ENCODE measurements at regions of chr11 and their contacts with region 1.

Region 1: DNA sequence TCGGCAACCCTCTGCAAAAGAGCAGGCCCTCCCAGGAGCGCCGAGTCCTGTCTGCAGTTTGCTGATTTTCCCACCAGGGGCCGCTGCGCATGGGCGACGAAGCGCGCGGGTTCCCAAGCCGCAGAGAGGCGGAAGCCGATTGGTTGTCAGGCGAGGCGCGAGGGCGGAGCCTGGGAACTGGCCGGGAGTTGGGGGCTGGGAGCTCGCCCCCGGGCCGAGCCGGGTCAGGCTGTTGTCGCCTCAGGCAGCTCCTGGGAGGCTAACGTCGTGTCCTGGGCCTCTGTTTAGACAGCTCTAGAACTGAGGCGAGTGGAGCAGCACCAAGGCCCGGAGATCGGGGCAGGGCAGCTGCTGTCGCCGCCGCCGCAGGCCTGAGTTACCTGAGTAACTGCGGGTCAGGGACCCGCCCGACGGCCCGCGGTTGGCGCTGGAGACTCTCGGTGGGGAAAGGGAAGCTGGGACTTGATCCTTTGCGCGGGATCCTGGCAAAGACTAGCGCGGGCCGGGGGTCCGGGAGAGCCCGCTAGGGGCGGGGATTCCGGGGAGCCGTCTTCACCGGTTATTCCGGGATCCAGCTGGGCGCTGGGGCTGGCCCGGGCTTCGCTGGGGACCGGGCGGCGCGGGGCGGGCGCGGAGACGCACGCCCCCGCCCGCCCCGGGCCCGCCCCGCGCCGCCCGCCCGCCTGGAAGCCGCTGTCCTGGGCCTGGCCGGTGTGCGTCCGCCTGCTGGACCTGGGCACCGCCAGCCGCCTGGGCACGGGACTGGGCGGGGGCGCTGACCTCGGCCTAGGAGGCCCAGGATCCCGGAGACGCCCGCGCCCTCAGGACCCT is at the start of gene STIM1:
- DNase-seq: peak; percentile 98
- ATAC-seq: peak; percentile 97
- total RNA-seq, gene STIM1: 49.6 TPM

Region 2: DNA sequence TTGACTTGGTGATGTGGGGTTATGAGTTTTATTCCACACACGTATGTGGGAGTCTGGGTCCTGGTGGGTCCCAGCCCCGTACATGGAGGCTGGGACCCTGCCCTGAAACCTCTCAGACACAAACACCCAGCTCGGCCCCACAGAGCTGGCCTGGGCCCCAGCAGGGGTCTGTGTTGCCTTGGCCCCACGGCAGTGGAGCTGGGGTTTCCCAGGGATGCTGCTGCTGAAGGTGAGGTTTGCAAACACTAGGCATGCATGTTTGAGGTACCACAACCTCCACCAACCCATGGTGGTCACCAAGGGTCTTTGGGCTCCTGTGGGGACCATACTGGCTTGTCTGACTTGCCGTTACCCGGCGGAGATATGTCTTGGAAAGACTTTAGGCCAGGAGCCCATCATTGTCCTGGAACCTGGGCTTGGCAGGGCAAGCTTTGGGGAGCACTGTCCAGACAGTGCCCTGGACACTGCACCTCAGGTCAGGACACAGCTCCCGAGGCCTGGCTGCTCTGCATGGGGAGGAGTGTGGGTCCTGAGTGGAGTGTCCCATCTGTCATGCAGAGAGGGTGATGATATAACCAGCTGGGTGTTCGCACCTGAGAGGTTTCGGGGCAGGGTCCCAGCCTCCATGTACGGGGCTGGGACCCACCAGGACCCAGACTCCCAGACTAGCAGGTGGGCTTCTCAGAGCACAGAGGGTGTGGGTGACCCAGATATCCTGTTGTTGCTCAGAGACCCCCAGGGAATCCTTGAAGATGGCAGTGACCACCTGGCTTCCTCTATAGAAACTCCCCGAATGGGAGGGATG is 1347.0 kb before region 1 on chr11:
- intact Hi-C with region 1: no loop called
- DNase-seq: peak; percentile 30
- ATAC-seq: no peak

Region 3: DNA sequence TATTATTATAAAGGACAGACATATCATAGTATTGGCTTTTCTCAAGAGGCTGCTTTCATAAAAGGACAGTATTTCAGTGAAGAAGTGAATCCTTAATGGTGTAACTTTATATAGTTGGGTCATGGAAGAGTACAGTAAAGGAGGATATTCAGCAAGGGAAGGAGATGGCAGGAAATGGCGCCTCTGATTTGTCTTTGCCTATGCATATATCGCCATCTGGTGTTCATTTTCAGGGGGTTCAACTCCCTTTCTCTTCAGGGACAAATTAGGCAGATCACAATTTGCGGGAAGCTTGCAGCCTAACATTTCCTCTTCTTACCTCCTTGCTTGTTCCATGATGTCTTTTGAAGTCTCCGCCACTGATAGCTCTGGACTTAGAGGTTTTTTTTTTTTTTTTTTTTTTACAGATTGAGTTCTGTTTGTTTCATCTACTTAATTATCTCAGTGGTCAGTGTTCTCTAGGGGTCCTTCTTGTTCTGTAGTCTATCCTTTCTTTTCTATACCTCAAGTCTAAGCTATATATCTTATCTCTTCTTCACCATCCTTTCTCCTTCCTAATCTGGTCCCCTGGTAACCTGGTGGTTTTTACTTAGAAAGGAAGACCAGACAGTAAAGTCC is 217.6 kb after region 1 on chr11:
- intact Hi-C with region 1: loop called (anchors 2 kb)
- DNase-seq: no peak
- ATAC-seq: peak; percentile 92